Endothelial cell of umbilical vein (primary cell): ENCODE measurements at regions of chr3 and their contacts with region 1.

Region 1: GRCh38 chr3:69691860-69692259 is 47.4 kb upstream of the MITF start:
- DNase-seq: no peak
- H3K4me3 ChIP-seq: no peak overlapping the region
- H3K27ac ChIP-seq: no peak overlapping the region
- H3K4me1 ChIP-seq: no peaks in the 10 kb centered on the region
- H3K27me3 ChIP-seq: peaks cover 6 to 10% of the 10 kb centered on the region in 2 experiments
- CTCF ChIP-seq: no peak
- POLR2A ChIP-seq: no peak

Region 2: GRCh38 chr3:69718866-69719586 is 27.2 kb after region 1 on chr3:
- CTCF ChIA-PET with region 1: interaction called, 13 read pairs
- POLR2A ChIA-PET with region 1: interaction called, 3 read pairs
- dilution Hi-C with region 1: no loop called
- intact Hi-C with region 1: no loop called
- DNase-seq: no peak
- H3K4me3 ChIP-seq: no peak overlapping the region
- H3K27ac ChIP-seq: no peak overlapping the region
- H3K4me1 ChIP-seq: no peaks in the 10 kb centered on the region
- H3K27me3 ChIP-seq: peaks cover 0 to 2% of the 10 kb centered on the region in 2 experiments
- CTCF ChIP-seq: no peak
- POLR2A ChIP-seq: no peak